K562 (cell line): ENCODE measurements at regions of chr17 and their contacts with region 1.

Region 1: DNA sequence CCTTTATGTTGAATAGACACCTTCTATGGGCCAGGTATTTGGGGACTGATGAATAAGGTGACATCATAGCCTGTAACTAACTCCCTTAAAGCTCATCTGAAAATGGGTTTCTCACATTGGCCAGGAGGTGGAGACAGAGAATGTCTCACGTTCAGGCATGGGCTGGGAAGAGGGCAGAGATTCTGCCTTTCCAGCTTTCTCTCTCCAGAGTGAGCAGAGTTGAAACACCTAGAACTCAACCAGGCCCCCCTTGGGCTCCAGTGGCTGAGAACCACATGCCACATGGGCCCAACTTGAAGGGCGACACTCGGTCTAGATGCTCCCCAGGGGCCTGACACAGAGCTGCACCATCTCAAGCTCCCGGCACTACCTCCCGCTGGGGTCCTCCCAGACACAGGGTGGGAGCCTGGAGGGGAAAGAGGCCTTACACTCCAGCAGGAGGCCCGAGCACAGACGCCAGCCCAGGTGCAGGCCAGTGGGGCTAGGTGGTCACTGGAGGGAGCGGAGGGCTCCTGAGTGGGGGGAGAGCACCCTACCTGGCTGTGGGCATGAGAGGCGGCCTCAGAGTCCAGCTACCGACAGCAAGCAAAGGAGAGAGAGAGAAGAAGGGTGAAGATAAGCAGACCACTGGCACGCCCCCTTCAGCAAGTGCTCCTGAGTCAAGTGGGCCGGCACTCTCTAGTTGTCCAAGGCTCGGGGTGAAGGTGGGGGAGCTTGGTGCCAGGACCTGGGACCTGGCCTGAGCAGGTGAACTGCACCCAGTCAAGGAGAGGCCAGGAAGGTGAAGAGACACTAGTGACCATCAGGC is 55.9 kb downstream of the MYO18A start:
- DNase-seq: peak; percentile 64 to 83 (median 68)
- ATAC-seq: peak; percentile 92
- H3K4me3 ChIP-seq: no peak overlapping the region
- H3K27ac ChIP-seq: no peak overlapping the region; the same call in 1 of the 3 replicates
- H3K4me1 ChIP-seq: peaks cover 23 to 44% of the 10 kb centered on the region in 2 experiments
- H3K27me3 ChIP-seq: no peaks in the 10 kb centered on the region
- CTCF ChIP-seq: peak; percentile 84 to 94 (median 89)
- EP300 ChIP-seq: no peak
- POLR2A ChIP-seq: no peak
- RAD21 ChIP-seq: peak; percentile 85 to 92

Region 2: DNA sequence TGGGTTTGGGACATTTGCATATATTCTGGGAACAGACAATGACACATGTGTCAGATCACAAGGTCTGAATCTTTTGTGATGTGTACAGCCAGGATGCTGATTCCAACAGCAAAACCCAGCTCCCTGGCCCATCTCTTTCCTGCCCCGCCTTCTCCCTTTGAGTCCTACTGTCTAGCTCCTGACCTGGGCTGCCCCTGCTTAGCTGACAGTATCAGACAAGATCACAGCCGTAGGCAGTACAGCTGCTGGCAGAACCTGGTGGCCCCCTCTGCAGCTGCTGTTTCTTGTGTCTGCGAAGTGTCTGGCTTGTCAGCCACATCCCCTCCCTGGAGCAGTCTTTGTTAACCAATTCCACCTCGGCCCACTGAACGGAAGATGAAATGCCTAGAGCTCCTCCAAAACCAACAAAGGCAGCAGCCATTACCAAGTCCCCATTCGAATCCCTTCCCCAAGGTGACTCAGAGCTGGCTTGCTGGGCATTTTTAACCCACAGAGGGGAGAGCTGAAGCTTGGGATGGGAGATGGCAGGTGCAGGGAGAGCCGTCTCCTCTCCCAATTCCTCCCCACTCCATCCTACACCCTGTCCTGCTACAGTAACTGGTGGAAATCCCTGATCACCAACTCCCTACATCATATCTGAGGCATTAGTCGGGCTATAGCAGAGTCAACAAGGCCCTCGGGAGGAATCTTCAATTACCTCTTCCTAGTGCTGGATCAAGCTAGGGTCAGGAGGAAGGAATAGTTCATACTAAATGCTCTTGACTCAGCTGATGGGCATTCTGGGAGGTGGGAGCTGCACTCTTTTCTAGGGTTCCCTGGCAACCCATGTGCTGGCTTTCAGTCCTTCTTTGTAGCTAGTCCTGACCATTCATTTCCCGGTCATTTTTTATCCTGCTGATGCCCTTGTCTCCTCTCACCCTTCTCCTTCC is 75.6 kb before region 1 on chr17:
- CTCF ChIA-PET with region 1: no interaction called
- POLR2A ChIA-PET with region 1: no interaction called
- in situ Hi-C with region 1: no loop called
- intact Hi-C with region 1: no loop called
- DNase-seq: no peak
- ATAC-seq: peak; percentile 55
- H3K4me3 ChIP-seq: no peak overlapping the region
- H3K27ac ChIP-seq: no peak overlapping the region
- H3K4me1 ChIP-seq: no peaks in the 10 kb centered on the region
- H3K27me3 ChIP-seq: peaks cover 58 to 66% of the 10 kb centered on the region in 2 experiments
- CTCF ChIP-seq: no peak
- EP300 ChIP-seq: no peak
- POLR2A ChIP-seq: no peak
- RAD21 ChIP-seq: no peak

Region 3: GRCh38 chr17:29143894-29144293 is 19.6 kb after region 1 on chr17:
- CTCF ChIA-PET with region 1: interaction called, 3 read pairs
- POLR2A ChIA-PET with region 1: interaction called, 7 read pairs
- in situ Hi-C with region 1: no loop called
- intact Hi-C with region 1: loop called (anchors 1 kb)
- DNase-seq: peak in 2 of 4 experiments; percentile 44 to 67
- ATAC-seq: peak; percentile 7; the same call in 1 of the 3 replicates
- H3K4me3 ChIP-seq: no peak overlapping the region
- H3K27ac ChIP-seq: no peak overlapping the region
- H3K4me1 ChIP-seq: peaks cover 57 to 66% of the 10 kb centered on the region in 2 experiments
- H3K27me3 ChIP-seq: no peaks in the 10 kb centered on the region
- CTCF ChIP-seq: peak; percentile 56 to 74 (median 66)
- EP300 ChIP-seq: no peak
- POLR2A ChIP-seq: no peak
- RAD21 ChIP-seq: peak; percentile 21 to 69

Region 4: GRCh38 chr17:29219378-29220047 is 95.2 kb after region 1 on chr17:
- CTCF ChIA-PET with region 1: interaction called, 7 read pairs
- POLR2A ChIA-PET with region 1: no interaction called
- in situ Hi-C with region 1: no loop called
- intact Hi-C with region 1: loop called (anchors 1 kb)
- DNase-seq: peak; percentile 84 to 91 (median 90)
- ATAC-seq: peak; percentile 98
- H3K4me3 ChIP-seq: no peak overlapping the region
- H3K27ac ChIP-seq: no peak overlapping the region
- H3K4me1 ChIP-seq: peaks cover 0 to 3% of the 10 kb centered on the region in 2 experiments; a peak in 1 of 5 replicates
- H3K27me3 ChIP-seq: no peaks in the 10 kb centered on the region
- CTCF ChIP-seq: peak; percentile 97 to 99 (median 98)
- EP300 ChIP-seq: no peak
- POLR2A ChIP-seq: no peak
- RAD21 ChIP-seq: peak; percentile 82 to 90